Activated B cell treated with CpG ODN at 0.5 μM for 24 hours (primary cell): ENCODE measurements at regions of chr2 and their contacts with region 1.

Region 1: GRCh38 chr2:78676921-78677696 is 348.4 kb upstream of the REG3G start:
- DNase-seq: no peak
- ATAC-seq: no peak
- H3K4me3 Mint-ChIP-seq: no peak overlapping the region
- H3K27ac Mint-ChIP-seq: no peak overlapping the region
- H3K4me1 Mint-ChIP-seq: no peaks in the 10 kb centered on the region
- H3K27me3 Mint-ChIP-seq: no peaks in the 10 kb centered on the region
- CTCF ChIP-seq: no peak

Region 2: DNA sequence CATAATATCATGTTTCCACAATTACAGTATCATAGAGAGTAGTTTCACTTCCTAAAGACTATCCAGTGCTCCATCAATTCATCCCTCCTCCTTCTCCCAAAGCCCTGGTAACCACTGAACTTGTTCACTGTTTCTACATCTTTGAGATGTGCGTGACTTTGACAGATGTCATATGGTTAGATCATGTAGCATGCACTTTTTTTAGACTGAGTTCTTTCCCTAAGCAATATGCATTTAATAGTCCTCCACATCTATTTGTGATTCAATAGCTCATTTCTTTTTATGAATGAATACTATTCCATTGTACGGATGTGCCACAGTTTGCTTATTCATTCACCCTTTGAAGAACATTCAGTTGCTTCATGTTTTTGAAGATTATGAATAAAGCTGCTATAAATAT is 594.6 kb before region 1 on chr2:
- CTCF ChIA-PET with region 1: no interaction called
- POLR2A ChIA-PET with region 1: no interaction called
- intact Hi-C with region 1: no loop called
- DNase-seq: no peak
- ATAC-seq: no peak
- H3K4me3 Mint-ChIP-seq: no peak overlapping the region
- H3K27ac Mint-ChIP-seq: no peak overlapping the region
- H3K4me1 Mint-ChIP-seq: no peaks in the 10 kb centered on the region
- H3K27me3 Mint-ChIP-seq: no peaks in the 10 kb centered on the region
- CTCF ChIP-seq: no peak

Region 3: GRCh38 chr2:78992451-78992806 is 315.3 kb after region 1 on chr2:
- CTCF ChIA-PET with region 1: no interaction called
- POLR2A ChIA-PET with region 1: no interaction called
- intact Hi-C with region 1: loop called (anchors 10 kb)
- DNase-seq: no peak
- ATAC-seq: no peak
- H3K4me3 Mint-ChIP-seq: peak overlapping the region; percentile 16
- H3K27ac Mint-ChIP-seq: no peak overlapping the region
- H3K4me1 Mint-ChIP-seq: peaks cover 12% of the 10 kb centered on the region
- H3K27me3 Mint-ChIP-seq: peaks cover 30% of the 10 kb centered on the region
- CTCF ChIP-seq: no peak